CD4-positive, alpha-beta T cell (primary cell): ENCODE measurements at regions of chr20 and their contacts with region 1.

Region 1: DNA sequence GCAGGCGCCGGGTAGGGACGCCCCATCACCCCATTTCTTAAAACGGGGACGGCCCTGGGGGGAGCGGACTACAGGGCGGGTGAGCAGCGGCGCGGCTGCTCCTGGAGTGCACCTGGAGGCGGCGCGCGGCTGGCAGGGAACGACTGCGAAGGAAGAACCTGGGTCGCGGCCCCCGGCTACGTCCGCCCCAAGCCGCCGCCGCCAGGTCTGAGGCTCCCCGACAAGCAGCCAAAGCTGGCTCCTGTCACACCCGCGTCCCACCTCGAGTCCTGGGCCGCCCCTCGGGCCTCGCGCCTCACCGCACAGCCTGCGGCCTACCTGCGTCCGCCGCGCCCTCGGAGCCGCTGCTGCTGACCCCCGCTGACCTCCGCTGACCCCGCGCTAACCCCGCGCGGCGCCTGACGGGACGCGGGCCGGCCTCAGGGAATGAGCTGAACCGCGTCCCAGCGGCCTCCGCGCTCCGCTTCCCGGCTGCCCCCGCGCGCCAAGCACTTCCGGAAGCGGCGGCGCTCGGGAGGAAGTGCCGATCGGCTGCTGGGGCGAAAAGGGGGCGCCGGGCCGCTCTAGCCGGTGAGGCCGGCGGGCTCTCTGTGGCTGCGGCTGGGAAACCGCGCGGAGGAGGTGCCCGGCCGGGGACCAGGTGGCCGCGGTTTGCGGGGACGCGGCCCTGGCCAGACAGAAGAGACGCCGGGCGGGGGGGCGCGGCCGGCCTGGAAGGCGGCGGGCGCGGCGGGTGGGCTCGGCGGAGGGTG is at the starts of genes ARFRP1 and ZGPAT:
- DNase-seq: peak; percentile 71 to 94 (median 88)
- ATAC-seq: peak; percentile 78
- H3K4me3 ChIP-seq: peak within 1 kb of the TSS; percentile 76
- H3K4me3 Mint-ChIP-seq: peak within 1 kb of the TSS; percentile 88
- H3K27ac ChIP-seq: peak within 1 kb of the TSS; percentile 55 to 71
- H3K27ac Mint-ChIP-seq: peak within 1 kb of the TSS; percentile 89
- H3K4me1 ChIP-seq: peaks cover 45% of the 10 kb centered on the region
- H3K4me1 Mint-ChIP-seq: peaks cover 46% of the 10 kb centered on the region
- H3K27me3 ChIP-seq: no peaks in the 10 kb centered on the region
- H3K27me3 Mint-ChIP-seq: no peaks in the 10 kb centered on the region
- CTCF ChIP-seq: no peak
- total RNA-seq, gene ARFRP1: 34.5 to 35.7 TPM
- total RNA-seq, gene ZGPAT: 28.2 to 33.4 TPM

Region 2: GRCh38 chr20:63567386-63568169 is 140.1 kb before region 1 on chr20:
- CTCF ChIA-PET with region 1: no interaction called
- POLR2A ChIA-PET with region 1: no interaction called
- intact Hi-C with region 1: no loop called
- DNase-seq: peak; percentile 25 to 82 (median 38)
- ATAC-seq: peak; percentile 57
- H3K4me3 ChIP-seq: peak overlapping the region; percentile 52
- H3K4me3 Mint-ChIP-seq: peak overlapping the region; percentile 78
- H3K27ac ChIP-seq: no peak overlapping the region
- H3K27ac Mint-ChIP-seq: peak overlapping the region; percentile 33
- H3K4me1 ChIP-seq: peaks cover 39% of the 10 kb centered on the region
- H3K4me1 Mint-ChIP-seq: peaks cover 16% of the 10 kb centered on the region
- H3K27me3 ChIP-seq: no peaks in the 10 kb centered on the region
- H3K27me3 Mint-ChIP-seq: no peaks in the 10 kb centered on the region
- CTCF ChIP-seq: no peak

Region 3: GRCh38 chr20:63580796-63581461 is 126.8 kb before region 1 on chr20:
- CTCF ChIA-PET with region 1: no interaction called
- POLR2A ChIA-PET with region 1: no interaction called
- intact Hi-C with region 1: loop called in 1 of 2 experiments (anchors 2 kb)
- DNase-seq: peak; percentile 62 to 87 (median 76)
- ATAC-seq: peak; percentile 99
- H3K4me3 ChIP-seq: no peak overlapping the region
- H3K4me3 Mint-ChIP-seq: no peak overlapping the region
- H3K27ac ChIP-seq: no peak overlapping the region
- H3K27ac Mint-ChIP-seq: peak overlapping the region; percentile 19
- H3K4me1 ChIP-seq: peaks cover 10% of the 10 kb centered on the region
- H3K4me1 Mint-ChIP-seq: peaks cover 20% of the 10 kb centered on the region
- H3K27me3 ChIP-seq: no peaks in the 10 kb centered on the region
- H3K27me3 Mint-ChIP-seq: no peaks in the 10 kb centered on the region
- CTCF ChIP-seq: peak; percentile 63

Region 4: GRCh38 chr20:63673951-63674350 is 33.8 kb before region 1 on chr20:
- CTCF ChIA-PET with region 1: no interaction called
- POLR2A ChIA-PET with region 1: no interaction called
- intact Hi-C with region 1: no loop called
- DNase-seq: no peak
- ATAC-seq: no peak
- H3K4me3 ChIP-seq: no peak overlapping the region
- H3K4me3 Mint-ChIP-seq: no peak overlapping the region
- H3K27ac ChIP-seq: no peak overlapping the region
- H3K27ac Mint-ChIP-seq: no peak overlapping the region
- H3K4me1 ChIP-seq: no peaks in the 10 kb centered on the region
- H3K4me1 Mint-ChIP-seq: no peaks in the 10 kb centered on the region
- H3K27me3 ChIP-seq: no peaks in the 10 kb centered on the region
- H3K27me3 Mint-ChIP-seq: no peaks in the 10 kb centered on the region
- CTCF ChIP-seq: no peak

Region 5: GRCh38 chr20:63733186-63734081 is 25.7 kb after region 1 on chr20:
- CTCF ChIA-PET with region 1: interaction called, 44 read pairs
- POLR2A ChIA-PET with region 1: interaction called, 168 read pairs
- intact Hi-C with region 1: loop called (anchors 1 to 2 kb)
- DNase-seq: no peak
- ATAC-seq: no peak
- H3K4me3 ChIP-seq: no peak overlapping the region
- H3K4me3 Mint-ChIP-seq: peak overlapping the region; percentile 57
- H3K27ac ChIP-seq: no peak overlapping the region
- H3K27ac Mint-ChIP-seq: no peak overlapping the region
- H3K4me1 ChIP-seq: peaks cover 76% of the 10 kb centered on the region
- H3K4me1 Mint-ChIP-seq: peaks cover 28% of the 10 kb centered on the region
- H3K27me3 ChIP-seq: no peaks in the 10 kb centered on the region
- H3K27me3 Mint-ChIP-seq: no peaks in the 10 kb centered on the region
- CTCF ChIP-seq: no peak

Region 6: DNA sequence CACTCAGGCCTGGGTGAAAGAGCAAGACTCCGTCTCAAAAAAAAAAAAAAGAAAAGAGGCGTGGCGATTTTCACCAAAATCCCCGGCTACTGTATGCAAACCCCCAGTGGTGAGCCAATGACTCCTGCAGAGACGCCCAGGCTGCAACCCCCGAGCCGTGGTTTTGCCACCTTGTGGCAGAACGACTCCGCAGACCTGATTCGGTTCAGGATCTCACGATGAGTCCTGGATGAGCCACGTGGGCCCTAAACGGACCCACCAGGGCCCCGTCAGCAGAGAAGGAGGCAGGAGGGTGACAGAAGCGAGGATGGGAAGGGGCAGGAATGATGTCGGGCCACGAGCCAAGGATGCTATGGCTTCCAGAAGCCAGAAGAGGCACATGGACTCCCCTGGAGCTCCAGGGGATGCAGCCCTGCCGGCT is 74.3 kb after region 1 on chr20:
- CTCF ChIA-PET with region 1: interaction called, 19 read pairs
- POLR2A ChIA-PET with region 1: interaction called, 8 read pairs
- intact Hi-C with region 1: loop called (anchors 1 kb)
- DNase-seq: peak in 13 of 14 experiments; percentile 16 to 88 (median 48)
- ATAC-seq: peak; percentile 93
- H3K4me3 ChIP-seq: peak overlapping the region; percentile 14
- H3K4me3 Mint-ChIP-seq: peak overlapping the region; percentile 43
- H3K27ac ChIP-seq: peak overlapping the region in 1 of 2 donors; percentile 22
- H3K27ac Mint-ChIP-seq: peak overlapping the region; percentile 67
- H3K4me1 ChIP-seq: peaks cover 23% of the 10 kb centered on the region
- H3K4me1 Mint-ChIP-seq: peaks cover 23% of the 10 kb centered on the region
- H3K27me3 ChIP-seq: no peaks in the 10 kb centered on the region
- H3K27me3 Mint-ChIP-seq: no peaks in the 10 kb centered on the region
- CTCF ChIP-seq: peak; percentile 51

Region 7: GRCh38 chr20:63955827-63956663 is 248.3 kb after region 1 on chr20 and contains the start of gene UCKL1:
- CTCF ChIA-PET with region 1: no interaction called
- POLR2A ChIA-PET with region 1: no interaction called
- intact Hi-C with region 1: loop called in 1 of 2 experiments (anchors 5 kb)
- DNase-seq: peak; percentile 81 to 95 (median 88)
- ATAC-seq: peak; percentile 79
- H3K4me3 ChIP-seq: peak within 1 kb of the TSS; percentile 77
- H3K4me3 Mint-ChIP-seq: peak within 1 kb of the TSS; percentile 87
- H3K27ac ChIP-seq: peak within 1 kb of the TSS; percentile 45 to 69
- H3K27ac Mint-ChIP-seq: peak within 1 kb of the TSS; percentile 82
- H3K4me1 ChIP-seq: peaks cover 59% of the 10 kb centered on the region
- H3K4me1 Mint-ChIP-seq: peaks cover 37% of the 10 kb centered on the region
- H3K27me3 ChIP-seq: no peaks in the 10 kb centered on the region
- H3K27me3 Mint-ChIP-seq: no peaks in the 10 kb centered on the region
- CTCF ChIP-seq: no peak
- total RNA-seq, gene UCKL1: 41.3 to 46.1 TPM

Region 8: DNA sequence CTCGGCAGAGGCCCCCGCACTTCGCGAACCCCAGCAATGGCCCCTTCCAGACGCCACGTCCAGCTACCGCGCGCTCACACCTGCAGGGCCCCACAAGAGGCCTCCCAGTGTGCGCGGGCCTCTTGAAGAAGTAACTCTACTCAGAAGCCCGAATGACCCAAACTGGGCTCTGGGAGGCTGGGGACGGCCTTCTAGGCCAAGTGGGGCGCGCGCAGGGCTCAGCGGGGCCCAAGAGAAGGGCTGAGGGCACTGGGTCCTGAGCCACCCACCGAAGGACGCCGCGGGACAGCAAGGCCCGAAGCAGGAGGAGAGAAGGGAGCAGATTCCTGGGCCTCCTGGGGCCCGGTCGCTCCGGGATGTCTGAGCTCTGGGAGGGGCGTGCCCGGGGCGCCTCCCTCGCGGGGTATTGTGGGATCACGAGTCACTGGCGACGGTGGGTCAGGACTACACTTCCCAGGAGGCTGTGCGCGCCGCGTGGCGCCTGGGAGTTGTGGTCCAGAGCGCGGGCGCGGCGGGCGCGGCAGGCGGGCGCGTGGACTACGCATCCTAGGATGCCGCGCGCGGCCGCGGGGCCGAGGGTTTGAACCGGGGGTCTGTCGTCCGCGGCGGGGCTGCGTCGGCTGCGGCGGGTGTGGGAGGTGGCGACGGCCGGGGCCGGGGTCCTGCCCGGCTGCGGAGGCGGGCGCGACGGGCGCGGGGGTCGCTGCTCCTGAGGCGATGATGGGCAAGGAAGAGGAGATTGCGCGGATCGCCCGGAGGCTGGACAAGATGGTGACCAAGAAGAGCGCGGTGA is 355.1 kb after region 1 on chr20 and contains the start of gene TCEA2:
- CTCF ChIA-PET with region 1: no interaction called
- POLR2A ChIA-PET with region 1: no interaction called
- intact Hi-C with region 1: loop called in 1 of 2 experiments (anchors 5 kb)
- DNase-seq: peak; percentile 86 to 96 (median 94)
- ATAC-seq: peak; percentile 90
- H3K4me3 ChIP-seq: peak within 1 kb of the TSS; percentile 56
- H3K4me3 Mint-ChIP-seq: peak within 1 kb of the TSS; percentile 85
- H3K27ac ChIP-seq: peak within 1 kb of the TSS in 1 of 2 donors; percentile 22
- H3K27ac Mint-ChIP-seq: peak within 1 kb of the TSS; percentile 48
- H3K4me1 ChIP-seq: peaks cover 58% of the 10 kb centered on the region
- H3K4me1 Mint-ChIP-seq: peaks cover 41% of the 10 kb centered on the region
- H3K27me3 ChIP-seq: no peaks in the 10 kb centered on the region
- H3K27me3 Mint-ChIP-seq: no peaks in the 10 kb centered on the region
- CTCF ChIP-seq: no peak
- total RNA-seq, gene TCEA2: 28.4 to 29.9 TPM